ENCODE measurements at regions of chr3 and their contacts with region 1.

Region 1: DNA sequence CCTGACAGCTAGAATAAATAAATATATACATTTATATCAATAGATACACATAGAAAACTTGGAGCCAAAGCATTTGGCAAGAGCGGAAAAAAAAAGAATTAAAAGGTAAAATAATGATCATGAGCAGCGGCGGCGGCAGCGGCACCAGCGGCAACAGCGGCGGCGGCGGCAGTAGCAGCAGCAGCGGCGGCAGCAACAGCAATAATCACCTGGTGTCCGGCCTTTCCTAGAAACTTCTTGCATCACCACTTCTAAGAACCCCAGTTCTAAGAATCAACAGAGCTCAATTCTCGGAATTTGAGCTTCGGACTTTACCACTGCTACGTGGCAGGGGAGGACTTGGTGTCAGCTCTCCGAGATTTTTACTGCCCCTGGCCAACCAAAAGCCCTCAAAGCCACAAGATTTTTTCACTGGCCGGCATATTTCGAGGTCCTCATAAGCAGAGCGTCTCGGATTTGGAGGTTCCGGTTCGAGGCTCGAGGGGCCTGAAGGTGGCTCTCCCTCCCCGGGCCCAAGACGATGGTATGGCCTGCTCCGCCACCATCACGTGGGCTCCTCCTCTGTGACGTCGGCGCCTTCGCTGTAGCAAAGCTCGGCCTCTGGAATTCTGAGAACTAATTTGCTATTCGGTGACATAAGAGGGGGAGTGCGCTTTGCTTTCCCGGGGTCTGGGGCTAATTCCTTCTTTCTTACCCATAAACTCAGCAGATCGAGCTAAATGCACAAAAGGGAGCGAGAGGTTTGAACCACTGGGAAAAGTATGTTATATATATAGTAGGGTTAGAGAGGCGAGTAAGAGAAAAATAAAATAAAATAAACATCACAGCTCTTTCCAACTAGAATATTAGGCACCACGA is at the start of gene BCL6:
- DNase-seq: peak; percentile 92
- ATAC-seq: peak; percentile 50
- H3K4me3 Mint-ChIP-seq: peak within 1 kb of the TSS; percentile 91
- H3K27ac Mint-ChIP-seq: peak within 1 kb of the TSS; percentile 99
- H3K4me1 Mint-ChIP-seq: peaks cover 63% of the 10 kb centered on the region
- H3K27me3 Mint-ChIP-seq: no peaks in the 10 kb centered on the region
- total RNA-seq, gene BCL6: 42.9 to 52.8 TPM

Region 2: GRCh38 chr3:187456250-187456649 is 289.2 kb before region 1 on chr3:
- CTCF ChIA-PET with region 1: no interaction called
- POLR2A ChIA-PET with region 1: no interaction called
- intact Hi-C with region 1: no loop called
- DNase-seq: no peak
- ATAC-seq: no peak
- H3K4me3 Mint-ChIP-seq: no peak overlapping the region
- H3K27ac Mint-ChIP-seq: no peak overlapping the region
- H3K4me1 Mint-ChIP-seq: no peaks in the 10 kb centered on the region
- H3K27me3 Mint-ChIP-seq: peaks cover 21% of the 10 kb centered on the region

Region 3: DNA sequence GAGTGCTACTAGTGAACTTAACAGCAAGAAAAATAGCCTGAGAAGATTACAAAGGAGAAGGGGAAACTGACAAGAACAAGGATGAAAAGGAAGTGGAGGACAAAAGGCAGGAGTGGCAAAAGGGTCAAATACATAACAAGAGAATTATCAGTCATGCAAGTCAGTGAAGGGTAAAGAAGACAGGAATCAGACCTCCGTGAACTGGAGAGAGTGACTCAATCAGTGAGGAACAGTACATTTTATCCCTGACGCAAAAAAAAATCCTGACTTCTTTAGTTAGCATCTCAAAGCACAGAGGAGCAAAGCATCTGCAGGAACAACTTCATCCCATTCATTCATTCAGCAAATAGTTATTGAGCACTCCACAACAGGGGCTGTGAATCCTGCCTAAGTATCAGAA is 173.0 kb before region 1 on chr3:
- CTCF ChIA-PET with region 1: no interaction called
- POLR2A ChIA-PET with region 1: no interaction called
- intact Hi-C with region 1: no loop called
- DNase-seq: no peak
- ATAC-seq: no peak
- H3K4me3 Mint-ChIP-seq: no peak overlapping the region
- H3K27ac Mint-ChIP-seq: no peak overlapping the region
- H3K4me1 Mint-ChIP-seq: no peaks in the 10 kb centered on the region
- H3K27me3 Mint-ChIP-seq: peaks cover 14% of the 10 kb centered on the region

Region 4: GRCh38 chr3:187770224-187770623 is 24.8 kb after region 1 on chr3:
- CTCF ChIA-PET with region 1: interaction called, 12 read pairs
- POLR2A ChIA-PET with region 1: interaction called, 11 read pairs
- intact Hi-C with region 1: no loop called
- DNase-seq: peak; percentile 56
- ATAC-seq: peak; percentile 97
- H3K4me3 Mint-ChIP-seq: peak overlapping the region; percentile 8
- H3K27ac Mint-ChIP-seq: peak overlapping the region; percentile 76
- H3K4me1 Mint-ChIP-seq: peaks cover 39% of the 10 kb centered on the region
- H3K27me3 Mint-ChIP-seq: peaks cover 13% of the 10 kb centered on the region

Region 5: DNA sequence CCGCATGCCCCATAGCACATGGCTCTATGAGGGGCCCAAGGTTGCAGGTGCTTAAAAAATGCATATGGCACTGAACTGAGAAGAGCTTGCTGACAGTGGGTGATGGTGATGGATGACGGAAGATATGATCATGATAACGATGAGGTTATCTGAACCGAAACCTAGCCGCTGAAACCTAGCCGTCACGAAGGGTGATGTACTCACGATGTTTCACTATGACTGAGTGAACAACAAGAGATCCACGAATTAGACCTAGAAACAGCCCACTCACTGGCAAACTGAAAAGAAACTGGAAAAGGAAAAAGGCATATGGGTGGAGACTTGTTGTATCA is 57.5 kb after region 1 on chr3:
- CTCF ChIA-PET with region 1: interaction called, 56 read pairs
- POLR2A ChIA-PET with region 1: interaction called, 15 read pairs
- intact Hi-C with region 1: loop called (anchors 1 to 2 kb)
- DNase-seq: peak; percentile 86
- ATAC-seq: peak; percentile 60
- H3K4me3 Mint-ChIP-seq: peak overlapping the region; percentile 34
- H3K27ac Mint-ChIP-seq: peak overlapping the region; percentile 81
- H3K4me1 Mint-ChIP-seq: peaks cover 93% of the 10 kb centered on the region
- H3K27me3 Mint-ChIP-seq: no peaks in the 10 kb centered on the region

Region 6: GRCh38 chr3:188021502-188022040 is 276.1 kb after region 1 on chr3:
- CTCF ChIA-PET with region 1: no interaction called
- POLR2A ChIA-PET with region 1: no interaction called
- intact Hi-C with region 1: no loop called
- DNase-seq: no peak
- ATAC-seq: no peak
- H3K4me3 Mint-ChIP-seq: no peak overlapping the region
- H3K27ac Mint-ChIP-seq: no peak overlapping the region
- H3K4me1 Mint-ChIP-seq: no peaks in the 10 kb centered on the region
- H3K27me3 Mint-ChIP-seq: peaks cover 2% of the 10 kb centered on the region

Region 7: GRCh38 chr3:188257384-188258026 is 512.1 kb after region 1 on chr3:
- CTCF ChIA-PET with region 1: interaction called, 21 read pairs
- POLR2A ChIA-PET with region 1: interaction called, 7 read pairs
- intact Hi-C with region 1: loop called (anchors 1 to 10 kb)
- DNase-seq: no peak
- ATAC-seq: peak; percentile 12
- H3K4me3 Mint-ChIP-seq: no peak overlapping the region
- H3K27ac Mint-ChIP-seq: peak overlapping the region; percentile 62
- H3K4me1 Mint-ChIP-seq: peaks cover 46% of the 10 kb centered on the region
- H3K27me3 Mint-ChIP-seq: no peaks in the 10 kb centered on the region

Region 8: GRCh38 chr3:188294823-188295487 is 549.5 kb after region 1 on chr3:
- CTCF ChIA-PET with region 1: interaction called, 35 read pairs
- POLR2A ChIA-PET with region 1: interaction called, 8 read pairs
- intact Hi-C with region 1: loop called (anchors 1 to 5 kb)
- DNase-seq: peak; percentile 29
- ATAC-seq: peak; percentile 37
- H3K4me3 Mint-ChIP-seq: no peak overlapping the region
- H3K27ac Mint-ChIP-seq: peak overlapping the region; percentile 69
- H3K4me1 Mint-ChIP-seq: peaks cover 74% of the 10 kb centered on the region
- H3K27me3 Mint-ChIP-seq: no peaks in the 10 kb centered on the region

Region 9: GRCh38 chr3:188507244-188507720 is 761.9 kb after region 1 on chr3:
- CTCF ChIA-PET with region 1: interaction called, 3 read pairs
- POLR2A ChIA-PET with region 1: no interaction called
- intact Hi-C with region 1: loop called in 1 of 2 experiments (anchors 10 kb)
- DNase-seq: no peak
- ATAC-seq: no peak
- H3K4me3 Mint-ChIP-seq: no peak overlapping the region
- H3K27ac Mint-ChIP-seq: no peak overlapping the region
- H3K4me1 Mint-ChIP-seq: peaks cover 10% of the 10 kb centered on the region
- H3K27me3 Mint-ChIP-seq: no peaks in the 10 kb centered on the region

Region 10: DNA sequence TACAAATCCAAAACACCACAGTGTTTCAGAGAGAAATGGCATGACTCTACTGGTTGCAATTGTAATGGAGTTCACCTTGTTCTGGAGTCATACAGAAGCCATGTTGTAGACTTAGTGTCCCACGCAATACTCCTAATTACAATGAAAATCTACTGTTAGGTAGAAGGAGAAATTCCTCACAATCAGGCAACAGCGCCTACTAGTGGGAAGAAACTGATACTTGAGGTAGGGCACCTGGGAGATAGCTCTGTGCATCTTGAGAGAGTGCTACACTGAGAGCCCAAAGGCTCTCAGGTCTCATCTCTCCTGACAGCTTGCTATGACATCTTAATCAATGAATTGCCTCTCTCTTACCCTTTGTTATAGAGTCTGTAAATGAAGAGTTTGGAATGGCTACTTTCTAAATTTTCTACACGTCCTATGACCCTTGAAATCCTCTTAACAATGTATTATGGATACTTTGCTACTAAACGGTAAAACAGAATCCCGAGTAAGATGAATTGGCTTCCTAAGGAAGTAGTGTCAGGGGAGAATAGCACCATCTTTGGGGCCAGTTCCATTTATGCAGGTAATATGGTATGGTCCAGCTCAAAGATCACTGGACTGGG is 1003.7 kb after region 1 on chr3:
- CTCF ChIA-PET with region 1: interaction called, 13 read pairs
- POLR2A ChIA-PET with region 1: no interaction called
- intact Hi-C with region 1: loop called (anchors 1 to 2 kb)
- DNase-seq: peak; percentile 59
- ATAC-seq: no peak
- H3K4me3 Mint-ChIP-seq: no peak overlapping the region
- H3K27ac Mint-ChIP-seq: no peak overlapping the region
- H3K4me1 Mint-ChIP-seq: peaks cover 30% of the 10 kb centered on the region
- H3K27me3 Mint-ChIP-seq: no peaks in the 10 kb centered on the region

Measured in activated CD4-positive, alpha-beta T cell treated with anti-CD3 and anti-CD28 coated beads for 36 hours (primary cell).